ENCODE measurements at regions of chr1 and their contacts with region 1.

Region 1: GRCh38 chr1:178684542-178685000 is 40.5 kb upstream of the RALGPS2 start:
- DNase-seq: no peak
- ATAC-seq: peak; percentile 41
- H3K4me3 ChIP-seq: no peak overlapping the region
- H3K4me3 Mint-ChIP-seq: peak overlapping the region; percentile 33
- H3K27ac ChIP-seq: peak overlapping the region in 1 of 2 donors; percentile 47
- H3K27ac Mint-ChIP-seq: peak overlapping the region; percentile 70
- H3K4me1 ChIP-seq: peaks cover 27 to 40% of the 10 kb centered on the region in 2 donors
- H3K4me1 Mint-ChIP-seq: peaks cover 53% of the 10 kb centered on the region
- H3K27me3 ChIP-seq: no peaks in the 10 kb centered on the region
- H3K27me3 Mint-ChIP-seq: no peaks in the 10 kb centered on the region
- CTCF ChIP-seq: no peak

Region 2: GRCh38 chr1:178575611-178576331 is 108.8 kb before region 1 on chr1:
- CTCF ChIA-PET with region 1: interaction called, 11 read pairs
- POLR2A ChIA-PET with region 1: no interaction called
- intact Hi-C with region 1: no loop called
- DNase-seq: peak; percentile 85
- ATAC-seq: peak; percentile 36
- H3K4me3 ChIP-seq: peak overlapping the region in 3 of 5 experiments; percentile 0 to 39 (median 2)
- H3K4me3 Mint-ChIP-seq: peak overlapping the region; percentile 75
- H3K27ac ChIP-seq: peak overlapping the region; percentile 95 to 97
- H3K27ac Mint-ChIP-seq: peak overlapping the region; percentile 93
- H3K4me1 ChIP-seq: peaks cover 79 to 88% of the 10 kb centered on the region in 2 donors
- H3K4me1 Mint-ChIP-seq: peaks cover 81% of the 10 kb centered on the region
- H3K27me3 ChIP-seq: no peaks in the 10 kb centered on the region
- H3K27me3 Mint-ChIP-seq: no peaks in the 10 kb centered on the region
- CTCF ChIP-seq: no peak